A673 (cell line): ENCODE measurements at regions of chr12 and their contacts with region 1.

Region 1: DNA sequence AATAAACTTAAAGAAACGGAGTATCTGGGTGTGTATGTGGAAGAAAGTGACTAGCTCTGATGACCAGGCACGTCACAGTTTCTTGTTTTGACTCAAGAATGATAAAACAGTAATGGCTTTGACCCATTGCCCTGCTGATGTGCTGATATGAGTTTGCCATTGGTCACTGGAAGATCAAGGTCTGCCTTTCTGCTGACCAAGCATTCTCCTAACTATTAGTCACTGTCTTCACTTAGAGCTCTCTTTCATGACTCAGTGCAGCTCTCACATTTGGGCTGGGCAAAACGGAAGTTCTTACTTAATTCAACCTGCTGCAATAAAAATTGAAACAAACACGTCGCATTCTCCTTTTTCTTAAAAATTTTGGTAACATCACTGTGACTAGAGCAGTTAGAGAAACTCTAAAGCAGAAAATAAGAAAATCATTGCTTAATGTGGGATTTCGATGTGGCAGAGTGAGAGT is 366.7 kb downstream of the BTG1 start:
- DNase-seq: peak; percentile 74
- H3K4me3 ChIP-seq: no peak overlapping the region
- H3K27ac ChIP-seq: peak overlapping the region; percentile 66
- H3K4me1 ChIP-seq: peaks cover 25% of the 10 kb centered on the region
- H3K27me3 ChIP-seq: no peaks in the 10 kb centered on the region
- CTCF ChIP-seq: no peak

Region 2: GRCh38 chr12:91577586-91578539 is 201.1 kb before region 1 on chr12:
- CTCF ChIA-PET with region 1: no interaction called
- POLR2A ChIA-PET with region 1: no interaction called
- intact Hi-C with region 1: loop called (anchors 10 kb)
- DNase-seq: peak; percentile 39
- H3K4me3 ChIP-seq: no peak overlapping the region
- H3K27ac ChIP-seq: no peak overlapping the region
- H3K4me1 ChIP-seq: peaks cover 28% of the 10 kb centered on the region
- H3K27me3 ChIP-seq: peaks cover 18% of the 10 kb centered on the region
- CTCF ChIP-seq: peak; percentile 68